ENCODE measurements at regions of chr17 and their contacts with region 1.

Region 1: DNA sequence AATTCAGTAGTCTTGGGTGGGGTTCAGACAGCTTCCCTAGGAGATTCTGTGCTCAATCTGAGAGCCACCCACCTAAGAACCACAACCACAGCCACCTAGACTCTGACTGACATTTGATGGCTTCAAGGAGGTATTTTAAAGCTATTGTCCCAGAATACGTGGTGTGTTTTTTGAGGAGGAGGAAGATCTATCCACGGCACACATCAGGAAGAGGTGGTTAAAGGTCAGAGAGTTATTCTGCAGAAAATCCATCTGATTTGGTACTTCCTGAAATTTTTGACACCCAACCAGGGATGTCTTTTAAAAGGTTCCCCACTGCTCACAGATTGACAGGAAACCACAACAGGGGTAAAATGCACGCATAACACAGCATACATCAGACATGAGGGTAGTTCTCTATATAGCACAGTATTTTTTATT is 25.1 kb downstream of the SMARCE1 start:
- DNase-seq: no peak
- H3K4me3 ChIP-seq: no peak overlapping the region
- H3K27ac ChIP-seq: no peak overlapping the region
- H3K4me1 ChIP-seq: no peaks in the 10 kb centered on the region
- H3K27me3 ChIP-seq: no peaks in the 10 kb centered on the region
- CTCF ChIP-seq: no peak

Region 2: DNA sequence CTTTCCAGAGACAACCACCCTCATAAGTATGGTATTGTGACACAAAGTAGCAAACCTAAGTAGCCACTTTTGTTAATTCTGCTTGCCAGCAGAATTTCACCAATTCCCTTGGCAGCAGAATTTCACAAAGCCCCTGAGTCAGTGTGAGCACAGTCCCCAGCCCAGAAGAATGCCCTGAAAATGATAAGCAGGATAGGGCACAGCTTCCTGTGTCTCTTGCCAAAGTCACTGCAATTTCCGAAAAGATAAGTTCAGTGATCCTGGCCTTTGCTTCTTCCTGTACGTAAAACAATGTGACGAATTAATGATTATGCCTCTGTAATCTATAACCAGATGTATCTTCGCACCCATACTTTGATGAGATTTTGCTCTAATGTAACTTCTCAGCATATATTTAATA is 419.4 kb before region 1 on chr17:
- intact Hi-C with region 1: no loop called
- DNase-seq: no peak
- H3K4me3 ChIP-seq: no peak overlapping the region
- H3K27ac ChIP-seq: no peak overlapping the region
- H3K4me1 ChIP-seq: no peaks in the 10 kb centered on the region
- H3K27me3 ChIP-seq: no peaks in the 10 kb centered on the region
- CTCF ChIP-seq: no peak

Region 3: DNA sequence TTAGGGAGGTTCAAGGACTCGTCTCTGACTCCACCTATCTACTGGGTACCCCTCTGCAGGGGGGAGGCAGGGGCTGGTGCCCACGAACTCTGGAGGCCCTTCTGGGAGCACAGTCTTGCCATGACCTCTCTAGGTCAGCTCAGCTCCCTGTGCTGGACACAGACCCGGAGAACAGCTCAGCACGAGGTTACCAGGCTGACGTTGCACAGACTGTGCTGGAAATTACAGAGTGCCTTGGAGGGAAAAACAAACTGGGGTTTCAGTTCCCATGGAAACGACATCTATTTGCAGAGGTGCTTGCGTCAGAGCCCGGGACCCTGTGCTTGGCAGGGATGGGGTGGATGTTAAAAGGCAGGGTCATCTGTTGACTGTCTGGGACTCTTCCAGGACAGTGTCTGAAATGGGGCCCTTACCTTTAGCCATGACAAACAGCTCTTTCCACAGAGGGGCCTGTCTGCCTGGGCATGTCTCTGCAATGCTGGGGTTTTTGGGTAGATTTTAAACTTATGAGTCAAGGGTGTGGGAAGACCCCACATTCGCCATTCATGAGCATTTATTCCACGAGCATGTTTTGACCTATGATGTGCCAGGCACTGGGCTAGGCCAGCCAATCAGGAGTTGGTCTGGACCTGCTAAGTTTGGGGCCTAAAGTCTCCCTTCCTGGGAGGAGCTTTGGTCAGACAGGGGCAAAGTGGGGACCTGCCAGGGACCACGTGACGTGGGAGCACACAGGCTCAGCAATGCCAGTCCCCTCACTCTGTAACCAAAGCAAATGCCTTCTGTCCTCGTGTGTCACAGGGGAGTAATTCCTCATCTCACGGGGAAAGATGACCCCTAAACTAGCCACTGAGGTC is 79.7 kb before region 1 on chr17:
- intact Hi-C with region 1: no loop called
- DNase-seq: peak; percentile 40 to 88
- H3K4me3 ChIP-seq: no peak overlapping the region
- H3K27ac ChIP-seq: peak overlapping the region; percentile 68 to 92
- H3K4me1 ChIP-seq: peaks cover 5 to 8% of the 10 kb centered on the region in 2 donors
- H3K27me3 ChIP-seq: no peaks in the 10 kb centered on the region
- CTCF ChIP-seq: no peak

Region 4: GRCh38 chr17:40791787-40792436 is 169.4 kb after region 1 on chr17:
- intact Hi-C with region 1: loop called (anchors 5 kb)
- DNase-seq: no peak
- H3K4me3 ChIP-seq: no peak overlapping the region
- H3K27ac ChIP-seq: no peak overlapping the region
- H3K4me1 ChIP-seq: no peaks in the 10 kb centered on the region
- H3K27me3 ChIP-seq: no peaks in the 10 kb centered on the region
- CTCF ChIP-seq: peak; percentile 12 to 38 (median 31)